ENCODE measurements at regions of chr6 and their contacts with region 1.

Region 1: DNA sequence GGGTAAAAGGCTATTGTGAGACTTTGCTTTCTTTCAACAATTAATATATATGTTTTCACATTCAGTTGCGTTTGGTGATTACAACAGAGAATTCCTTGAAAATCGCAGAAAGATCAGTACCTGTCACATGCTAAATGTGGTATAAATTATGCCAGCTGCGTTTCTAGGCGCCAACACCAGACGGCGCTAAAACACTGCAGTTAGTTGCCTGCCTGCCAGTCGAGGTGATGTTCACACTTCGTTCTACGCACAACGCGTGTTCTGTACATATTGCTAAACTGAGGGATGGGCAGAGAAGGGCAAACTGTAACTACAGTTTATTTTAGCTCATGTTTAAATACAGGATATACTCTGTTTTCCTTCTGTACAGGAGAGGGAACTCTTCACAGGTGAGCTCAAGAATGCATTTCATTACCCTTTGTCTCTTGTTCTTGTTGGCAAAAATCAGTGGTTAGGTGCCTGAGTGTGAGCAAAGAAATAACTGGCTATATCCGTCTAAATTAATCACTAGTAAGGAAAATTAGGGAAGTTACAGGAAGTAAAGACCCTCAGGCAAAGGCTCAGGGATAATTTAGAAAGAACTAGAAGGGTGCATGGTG is 100.1 kb upstream of the RGS17 start:
- DNase-seq: peak; percentile 51
- H3K4me3 ChIP-seq: peak overlapping the region in 1 of 2 experiments; percentile 51; a peak in 1 of 4 replicates
- H3K27ac ChIP-seq: no peak overlapping the region
- H3K4me1 ChIP-seq: peaks cover 0 to 3% of the 10 kb centered on the region in 2 experiments; a peak in 3 of 4 replicates
- H3K27me3 ChIP-seq: no peaks in the 10 kb centered on the region
- CTCF ChIP-seq: peak; percentile 77
- EP300 ChIP-seq: no peak
- RAD21 ChIP-seq: peak; percentile 98

Region 2: GRCh38 chr6:153218184-153218792 is 12.9 kb before region 1 on chr6:
- CTCF ChIA-PET with region 1: interaction called, 18 read pairs
- POLR2A ChIA-PET with region 1: no interaction called
- DNase-seq: no peak
- H3K4me3 ChIP-seq: no peak overlapping the region
- H3K27ac ChIP-seq: no peak overlapping the region
- H3K4me1 ChIP-seq: peaks cover 0 to 7% of the 10 kb centered on the region in 2 experiments; a peak in 1 of 4 replicates
- H3K27me3 ChIP-seq: no peaks in the 10 kb centered on the region
- CTCF ChIP-seq: no peak
- EP300 ChIP-seq: no peak
- RAD21 ChIP-seq: no peak

Region 3: DNA sequence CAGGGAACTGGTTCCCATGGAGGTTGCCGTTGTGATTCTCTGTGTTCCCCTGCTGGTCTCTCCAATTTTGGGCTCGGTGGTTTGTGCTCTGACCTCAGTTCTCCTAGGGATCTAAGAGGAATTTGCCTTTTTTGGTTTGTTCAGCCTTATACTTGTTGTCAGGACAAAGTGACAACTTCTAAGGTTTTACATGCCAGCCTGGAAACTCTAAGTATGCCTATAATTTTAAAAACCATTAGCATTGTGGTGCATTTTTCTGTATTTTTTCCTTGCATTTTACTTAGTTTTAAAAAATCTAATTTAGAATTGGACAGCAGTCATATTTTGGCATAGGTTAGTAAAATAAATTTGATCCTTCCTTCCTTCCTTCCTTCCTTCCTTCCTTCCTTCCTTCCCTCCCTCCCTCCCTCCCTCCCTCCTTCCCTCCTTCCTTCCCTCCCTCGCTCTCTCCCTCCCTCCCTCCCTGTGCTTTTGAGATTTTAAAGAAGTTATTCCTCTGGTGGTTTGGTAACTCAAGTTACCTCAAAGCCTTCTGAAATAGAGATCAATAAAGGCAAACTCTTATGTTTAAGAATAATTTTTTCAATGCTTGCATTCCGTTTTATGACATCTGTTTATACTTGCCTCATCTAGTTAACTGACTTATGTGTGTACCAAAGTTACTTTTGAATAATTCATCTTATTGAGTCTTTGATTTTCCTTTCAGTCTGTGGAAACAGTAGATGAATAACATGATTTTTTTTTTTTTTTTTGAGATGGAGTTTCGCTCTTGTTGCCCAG is 41.2 kb after region 1 on chr6:
- CTCF ChIA-PET with region 1: no interaction called
- POLR2A ChIA-PET with region 1: no interaction called
- DNase-seq: no peak
- H3K4me3 ChIP-seq: no peak overlapping the region
- H3K27ac ChIP-seq: peak overlapping the region in 1 of 2 experiments; percentile 11; a peak in 1 of 4 replicates
- H3K4me1 ChIP-seq: peaks cover 0 to 2% of the 10 kb centered on the region in 2 experiments; a peak in 2 of 4 replicates
- H3K27me3 ChIP-seq: no peaks in the 10 kb centered on the region
- CTCF ChIP-seq: no peak
- EP300 ChIP-seq: no peak
- RAD21 ChIP-seq: no peak

Region 4: GRCh38 chr6:153301602-153302001 is 70.5 kb after region 1 on chr6:
- CTCF ChIA-PET with region 1: interaction called, 13 read pairs
- POLR2A ChIA-PET with region 1: no interaction called
- DNase-seq: no peak
- H3K4me3 ChIP-seq: no peak overlapping the region
- H3K27ac ChIP-seq: no peak overlapping the region
- H3K4me1 ChIP-seq: no peaks in the 10 kb centered on the region; a peak in 1 of 4 replicates
- H3K27me3 ChIP-seq: no peaks in the 10 kb centered on the region
- CTCF ChIP-seq: no peak
- EP300 ChIP-seq: no peak
- RAD21 ChIP-seq: no peak

Region 5: GRCh38 chr6:153947808-153948447 is 716.8 kb after region 1 on chr6:
- CTCF ChIA-PET with region 1: interaction called, 28 read pairs
- POLR2A ChIA-PET with region 1: no interaction called
- DNase-seq: peak; percentile 19
- H3K4me3 ChIP-seq: no peak overlapping the region; a peak in 1 of 4 replicates
- H3K27ac ChIP-seq: no peak overlapping the region
- H3K4me1 ChIP-seq: peaks cover 0 to 2% of the 10 kb centered on the region in 2 experiments; a peak in 1 of 4 replicates
- H3K27me3 ChIP-seq: no peaks in the 10 kb centered on the region
- CTCF ChIP-seq: peak; percentile 86
- EP300 ChIP-seq: no peak
- RAD21 ChIP-seq: peak; percentile 84

Region 6: GRCh38 chr6:154276810-154277628 is 1045.9 kb after region 1 on chr6:
- CTCF ChIA-PET with region 1: interaction called, 19 read pairs
- POLR2A ChIA-PET with region 1: no interaction called
- DNase-seq: peak; percentile 53
- H3K4me3 ChIP-seq: no peak overlapping the region; a peak in 1 of 4 replicates
- H3K27ac ChIP-seq: no peak overlapping the region
- H3K4me1 ChIP-seq: peaks cover 0 to 4% of the 10 kb centered on the region in 2 experiments; a peak in 1 of 4 replicates
- H3K27me3 ChIP-seq: no peaks in the 10 kb centered on the region
- CTCF ChIP-seq: peak; percentile 57
- EP300 ChIP-seq: no peak
- RAD21 ChIP-seq: peak; percentile 80

Measured in SK-N-SH (cell line).